ENCODE measurements at regions of chr3 and their contacts with region 1.

Region 1: DNA sequence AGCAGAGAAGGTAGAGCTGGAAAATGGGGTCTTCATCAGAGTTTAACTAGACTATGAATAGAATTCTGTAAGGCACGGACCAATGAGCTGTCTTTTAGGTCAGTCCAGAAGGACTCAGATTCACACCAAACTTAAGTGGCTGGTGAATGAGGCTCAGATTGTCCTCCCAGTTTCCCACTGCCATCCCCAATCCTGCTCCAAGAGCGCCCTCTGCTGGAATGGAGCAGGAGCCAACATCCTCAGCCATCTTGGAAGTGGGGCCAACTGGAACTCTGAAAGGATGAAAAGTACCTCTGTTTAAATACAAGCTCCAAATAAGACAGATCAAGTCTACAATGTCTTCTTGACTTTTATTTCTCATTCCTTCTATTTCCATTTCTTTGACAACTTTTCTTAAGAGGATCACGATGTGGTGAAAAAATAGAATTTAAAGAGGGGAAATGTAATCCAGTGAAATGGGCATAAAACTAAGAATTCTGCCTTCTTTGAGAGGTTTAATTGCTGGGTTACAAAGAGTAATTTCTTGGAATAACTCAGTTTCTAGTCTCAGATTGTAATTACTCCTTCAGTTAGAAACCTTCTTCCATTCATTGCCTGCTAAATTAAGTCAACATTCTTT is 217.1 kb upstream of the TPRG1 start:
- DNase-seq: peak; percentile 78
- ATAC-seq: peak; percentile 56
- H3K4me3 Mint-ChIP-seq: no peak overlapping the region
- H3K27ac Mint-ChIP-seq: no peak overlapping the region
- H3K4me1 Mint-ChIP-seq: peaks cover 40% of the 10 kb centered on the region
- H3K27me3 Mint-ChIP-seq: no peaks in the 10 kb centered on the region
- CTCF ChIP-seq: peak; percentile 90

Region 2: DNA sequence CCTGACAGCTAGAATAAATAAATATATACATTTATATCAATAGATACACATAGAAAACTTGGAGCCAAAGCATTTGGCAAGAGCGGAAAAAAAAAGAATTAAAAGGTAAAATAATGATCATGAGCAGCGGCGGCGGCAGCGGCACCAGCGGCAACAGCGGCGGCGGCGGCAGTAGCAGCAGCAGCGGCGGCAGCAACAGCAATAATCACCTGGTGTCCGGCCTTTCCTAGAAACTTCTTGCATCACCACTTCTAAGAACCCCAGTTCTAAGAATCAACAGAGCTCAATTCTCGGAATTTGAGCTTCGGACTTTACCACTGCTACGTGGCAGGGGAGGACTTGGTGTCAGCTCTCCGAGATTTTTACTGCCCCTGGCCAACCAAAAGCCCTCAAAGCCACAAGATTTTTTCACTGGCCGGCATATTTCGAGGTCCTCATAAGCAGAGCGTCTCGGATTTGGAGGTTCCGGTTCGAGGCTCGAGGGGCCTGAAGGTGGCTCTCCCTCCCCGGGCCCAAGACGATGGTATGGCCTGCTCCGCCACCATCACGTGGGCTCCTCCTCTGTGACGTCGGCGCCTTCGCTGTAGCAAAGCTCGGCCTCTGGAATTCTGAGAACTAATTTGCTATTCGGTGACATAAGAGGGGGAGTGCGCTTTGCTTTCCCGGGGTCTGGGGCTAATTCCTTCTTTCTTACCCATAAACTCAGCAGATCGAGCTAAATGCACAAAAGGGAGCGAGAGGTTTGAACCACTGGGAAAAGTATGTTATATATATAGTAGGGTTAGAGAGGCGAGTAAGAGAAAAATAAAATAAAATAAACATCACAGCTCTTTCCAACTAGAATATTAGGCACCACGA is 1209.3 kb before region 1 on chr3 and contains the start of gene BCL6:
- CTCF ChIA-PET with region 1: interaction called, 346 read pairs
- POLR2A ChIA-PET with region 1: interaction called, 13 read pairs
- intact Hi-C with region 1: no loop called
- DNase-seq: peak; percentile 93
- ATAC-seq: peak; percentile 57
- H3K4me3 Mint-ChIP-seq: peak within 1 kb of the TSS; percentile 93
- H3K27ac Mint-ChIP-seq: peak within 1 kb of the TSS; percentile 98
- H3K4me1 Mint-ChIP-seq: peaks cover 56% of the 10 kb centered on the region
- H3K27me3 Mint-ChIP-seq: no peaks in the 10 kb centered on the region
- CTCF ChIP-seq: no peak
- total RNA-seq, gene BCL6: 13.7 to 14.0 TPM

Region 3: DNA sequence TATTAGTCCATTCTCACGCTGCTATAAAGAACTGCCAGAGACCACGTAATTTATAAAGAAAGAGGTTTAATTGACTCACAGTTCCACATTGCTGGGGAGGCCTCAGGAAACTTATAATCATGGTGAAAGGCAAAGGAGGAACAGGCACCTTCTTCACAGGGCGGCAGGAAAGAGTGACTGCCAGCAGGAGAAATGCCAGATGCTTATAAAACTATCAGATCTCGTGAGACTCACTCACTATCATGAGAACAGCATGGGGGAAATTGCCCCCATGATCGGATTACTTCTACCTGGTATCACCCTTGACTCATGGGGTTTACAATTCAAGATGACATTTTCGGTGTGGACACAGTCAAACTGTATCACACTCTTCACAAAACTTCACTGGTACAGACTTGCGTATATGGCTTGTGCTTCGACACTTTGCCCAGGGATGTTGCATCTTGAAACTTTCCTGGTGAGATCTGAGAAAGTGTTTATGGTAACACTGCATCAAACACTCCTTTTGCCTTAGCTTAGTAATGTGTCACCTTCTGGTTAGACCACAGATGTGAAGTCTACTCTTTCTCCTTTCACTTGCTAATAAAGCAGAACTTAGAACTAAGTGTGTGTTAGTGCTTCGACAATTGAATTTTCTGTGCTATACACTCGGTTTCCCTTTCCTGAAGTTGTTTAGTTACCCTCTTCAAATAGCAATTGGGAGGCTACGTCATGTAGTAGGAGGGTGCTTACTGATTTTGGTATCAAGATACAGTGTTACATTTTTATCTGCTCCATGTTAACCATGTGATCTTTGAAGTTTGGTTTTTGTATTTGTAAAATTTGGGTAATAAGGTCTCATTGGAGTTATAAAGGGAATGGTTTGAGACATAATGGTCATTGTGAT is 615.0 kb before region 1 on chr3:
- CTCF ChIA-PET with region 1: no interaction called
- POLR2A ChIA-PET with region 1: no interaction called
- intact Hi-C with region 1: loop called (anchors 10 kb)
- DNase-seq: peak; percentile 74
- ATAC-seq: peak; percentile 88
- H3K4me3 Mint-ChIP-seq: peak overlapping the region; percentile 68
- H3K27ac Mint-ChIP-seq: peak overlapping the region; percentile 95
- H3K4me1 Mint-ChIP-seq: peaks cover 42% of the 10 kb centered on the region
- H3K27me3 Mint-ChIP-seq: no peaks in the 10 kb centered on the region
- CTCF ChIP-seq: no peak

Region 4: DNA sequence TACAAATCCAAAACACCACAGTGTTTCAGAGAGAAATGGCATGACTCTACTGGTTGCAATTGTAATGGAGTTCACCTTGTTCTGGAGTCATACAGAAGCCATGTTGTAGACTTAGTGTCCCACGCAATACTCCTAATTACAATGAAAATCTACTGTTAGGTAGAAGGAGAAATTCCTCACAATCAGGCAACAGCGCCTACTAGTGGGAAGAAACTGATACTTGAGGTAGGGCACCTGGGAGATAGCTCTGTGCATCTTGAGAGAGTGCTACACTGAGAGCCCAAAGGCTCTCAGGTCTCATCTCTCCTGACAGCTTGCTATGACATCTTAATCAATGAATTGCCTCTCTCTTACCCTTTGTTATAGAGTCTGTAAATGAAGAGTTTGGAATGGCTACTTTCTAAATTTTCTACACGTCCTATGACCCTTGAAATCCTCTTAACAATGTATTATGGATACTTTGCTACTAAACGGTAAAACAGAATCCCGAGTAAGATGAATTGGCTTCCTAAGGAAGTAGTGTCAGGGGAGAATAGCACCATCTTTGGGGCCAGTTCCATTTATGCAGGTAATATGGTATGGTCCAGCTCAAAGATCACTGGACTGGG is 205.6 kb before region 1 on chr3:
- CTCF ChIA-PET with region 1: interaction called, 17 read pairs
- POLR2A ChIA-PET with region 1: no interaction called
- intact Hi-C with region 1: no loop called
- DNase-seq: peak; percentile 60
- ATAC-seq: no peak
- H3K4me3 Mint-ChIP-seq: no peak overlapping the region
- H3K27ac Mint-ChIP-seq: no peak overlapping the region
- H3K4me1 Mint-ChIP-seq: peaks cover 27% of the 10 kb centered on the region
- H3K27me3 Mint-ChIP-seq: no peaks in the 10 kb centered on the region
- CTCF ChIP-seq: peak; percentile 69

Region 5: GRCh38 chr3:188841906-188842305 is 112.8 kb before region 1 on chr3:
- CTCF ChIA-PET with region 1: interaction called, 24 read pairs
- POLR2A ChIA-PET with region 1: no interaction called
- intact Hi-C with region 1: no loop called
- DNase-seq: no peak
- ATAC-seq: no peak
- H3K4me3 Mint-ChIP-seq: no peak overlapping the region
- H3K27ac Mint-ChIP-seq: no peak overlapping the region
- H3K4me1 Mint-ChIP-seq: no peaks in the 10 kb centered on the region
- H3K27me3 Mint-ChIP-seq: no peaks in the 10 kb centered on the region
- CTCF ChIP-seq: no peak

Region 6: DNA sequence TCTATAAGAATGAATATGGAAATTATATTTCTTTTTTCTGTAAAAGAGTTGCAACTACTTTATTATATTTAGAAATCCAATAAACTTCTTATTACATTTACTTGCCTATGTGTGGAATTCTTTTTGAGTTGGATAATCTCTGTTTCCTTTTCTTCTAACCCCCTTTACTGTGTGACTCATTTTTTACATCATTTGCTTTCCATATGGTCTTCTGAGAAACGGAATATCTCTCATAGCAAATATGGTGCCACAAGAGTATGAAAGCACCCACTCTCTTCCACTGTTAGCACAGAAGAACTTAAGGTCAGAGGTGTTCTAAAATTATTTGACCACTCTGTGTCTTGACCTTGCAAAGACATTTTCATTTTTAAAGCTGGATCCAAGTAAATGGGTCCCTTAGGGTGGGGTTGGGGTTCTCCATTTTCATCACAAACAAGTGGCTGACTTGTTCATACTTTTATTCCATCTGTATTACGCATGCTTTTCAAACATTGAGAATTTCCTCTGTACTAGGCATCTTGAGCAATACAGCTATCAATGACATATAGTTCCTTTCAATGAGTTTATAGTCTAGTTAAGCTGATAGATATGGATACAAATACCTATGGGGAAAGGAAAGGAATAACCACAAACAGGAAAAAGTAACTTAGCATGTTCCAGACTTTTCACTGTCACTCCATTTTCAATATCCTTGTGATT is 64.0 kb before region 1 on chr3:
- CTCF ChIA-PET with region 1: no interaction called
- POLR2A ChIA-PET with region 1: no interaction called
- intact Hi-C with region 1: no loop called
- DNase-seq: no peak
- ATAC-seq: no peak
- H3K4me3 Mint-ChIP-seq: no peak overlapping the region
- H3K27ac Mint-ChIP-seq: no peak overlapping the region
- H3K4me1 Mint-ChIP-seq: peaks cover 9% of the 10 kb centered on the region
- H3K27me3 Mint-ChIP-seq: no peaks in the 10 kb centered on the region
- CTCF ChIP-seq: no peak

Region 7: DNA sequence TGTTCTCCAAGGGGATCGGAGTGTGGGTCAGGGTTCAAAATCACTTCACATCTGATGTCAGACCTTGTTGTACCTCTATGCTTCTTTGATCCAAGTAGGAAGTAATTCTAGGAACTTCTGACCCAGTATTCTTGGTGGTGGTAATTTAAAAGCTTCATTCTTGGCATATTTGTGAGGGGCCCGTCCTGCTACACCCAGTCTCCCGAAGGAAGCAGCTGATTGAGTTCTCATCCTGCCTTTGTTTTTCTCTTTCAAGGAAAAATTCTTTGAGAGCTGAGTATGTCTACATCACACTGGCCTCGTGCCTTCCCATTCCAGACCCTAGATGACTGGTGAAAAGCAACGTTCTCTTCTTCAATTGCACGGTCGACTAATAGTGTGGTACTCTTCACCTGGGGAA is 17.3 kb before region 1 on chr3:
- CTCF ChIA-PET with region 1: interaction called, 41 read pairs
- POLR2A ChIA-PET with region 1: no interaction called
- intact Hi-C with region 1: no loop called
- DNase-seq: no peak
- ATAC-seq: no peak
- H3K4me3 Mint-ChIP-seq: no peak overlapping the region
- H3K27ac Mint-ChIP-seq: no peak overlapping the region
- H3K4me1 Mint-ChIP-seq: peaks cover 2% of the 10 kb centered on the region
- H3K27me3 Mint-ChIP-seq: no peaks in the 10 kb centered on the region
- CTCF ChIP-seq: no peak

Region 8: GRCh38 chr3:189027626-189028155 is 73.0 kb after region 1 on chr3:
- CTCF ChIA-PET with region 1: no interaction called
- POLR2A ChIA-PET with region 1: no interaction called
- intact Hi-C with region 1: no loop called
- DNase-seq: no peak
- ATAC-seq: no peak
- H3K4me3 Mint-ChIP-seq: no peak overlapping the region
- H3K27ac Mint-ChIP-seq: no peak overlapping the region
- H3K4me1 Mint-ChIP-seq: no peaks in the 10 kb centered on the region
- H3K27me3 Mint-ChIP-seq: peaks cover 12% of the 10 kb centered on the region
- CTCF ChIP-seq: no peak

Region 9: DNA sequence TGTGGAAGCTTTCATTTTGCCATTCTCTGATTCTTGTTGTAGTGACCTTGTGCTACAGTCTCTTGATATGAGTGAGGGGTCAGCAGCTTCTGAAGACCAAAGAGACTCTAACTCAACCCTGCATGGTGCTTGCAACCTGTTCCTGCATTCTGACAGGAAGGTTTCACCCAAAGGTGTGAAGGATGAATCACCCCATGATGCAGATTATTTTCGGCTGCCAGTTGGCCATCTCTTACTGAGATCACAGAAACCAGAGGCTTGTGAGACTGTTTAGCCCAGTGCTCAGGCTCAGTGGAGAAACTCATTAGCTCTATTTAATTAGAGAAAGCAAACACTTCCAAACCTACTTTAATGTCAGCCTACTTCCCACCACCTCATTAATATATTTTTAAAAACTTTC is 187.8 kb after region 1 on chr3:
- CTCF ChIA-PET with region 1: interaction called, 35 read pairs
- POLR2A ChIA-PET with region 1: no interaction called
- intact Hi-C with region 1: loop called (anchors 5 kb)
- DNase-seq: peak; percentile 57
- ATAC-seq: peak; percentile 87
- H3K4me3 Mint-ChIP-seq: no peak overlapping the region
- H3K27ac Mint-ChIP-seq: no peak overlapping the region
- H3K4me1 Mint-ChIP-seq: peaks cover 33% of the 10 kb centered on the region
- H3K27me3 Mint-ChIP-seq: peaks cover 4% of the 10 kb centered on the region
- CTCF ChIP-seq: no peak

Measured in activated CD8-positive, alpha-beta T cell treated with anti-CD3 and anti-CD28 coated beads for 36 hours (primary cell).